ENCODE measurements at regions of chr13 and their contacts with region 1.

Region 1: DNA sequence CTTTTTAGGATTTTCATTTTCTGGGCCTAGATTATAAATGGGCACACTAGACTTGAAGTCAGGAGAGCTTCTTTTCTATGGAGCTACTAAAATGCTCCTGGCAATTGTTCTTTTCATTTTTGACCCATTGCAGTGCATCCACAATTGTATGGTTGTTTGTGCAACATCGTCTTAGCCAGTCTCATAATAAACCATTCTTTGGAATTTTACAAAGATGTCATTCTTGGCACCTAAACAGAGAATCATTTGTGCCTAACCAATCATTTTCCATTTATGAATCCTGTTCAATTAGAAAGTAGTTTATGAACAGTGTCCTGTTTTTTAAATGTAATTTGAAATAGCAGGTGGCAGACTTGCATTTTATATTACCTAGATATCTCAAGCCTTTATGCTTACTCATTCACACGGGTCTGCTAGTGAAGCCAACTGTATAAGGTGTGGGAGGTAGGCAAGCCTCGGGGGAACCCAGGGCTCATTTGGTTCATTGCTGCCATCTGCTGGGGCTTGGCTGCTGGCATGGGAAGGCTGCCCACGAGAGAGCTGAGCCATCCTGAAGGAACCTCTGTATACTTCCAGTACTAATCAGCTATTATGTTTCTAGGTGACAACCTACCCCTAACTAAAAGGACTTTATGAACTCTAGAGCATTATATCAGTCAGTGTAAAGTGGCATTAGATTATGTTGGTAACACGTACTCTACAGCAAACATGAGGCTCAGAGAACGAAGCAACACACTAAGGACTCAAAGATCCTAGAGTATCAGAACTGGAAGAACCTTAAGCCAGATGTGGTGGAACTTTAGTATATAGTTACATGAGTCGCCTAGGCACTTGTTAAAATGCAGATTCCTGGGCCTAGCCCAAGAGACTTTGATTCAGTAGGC is 60.0 kb downstream of the TPT1 start:
- DNase-seq: peak; percentile 67 to 79
- ATAC-seq: peak; percentile 99 to 100
- H3K4me3 ChIP-seq: no peak overlapping the region
- H3K27ac ChIP-seq: no peak overlapping the region
- H3K4me1 ChIP-seq: peaks cover 6% of the 10 kb centered on the region; the same call in 2 of the 3 replicates
- CTCF ChIP-seq: peak; percentile 79
- EP300 ChIP-seq: no peak
- POLR2A ChIP-seq: no peak
- RAD21 ChIP-seq: peak; percentile 91 to 92

Region 2: DNA sequence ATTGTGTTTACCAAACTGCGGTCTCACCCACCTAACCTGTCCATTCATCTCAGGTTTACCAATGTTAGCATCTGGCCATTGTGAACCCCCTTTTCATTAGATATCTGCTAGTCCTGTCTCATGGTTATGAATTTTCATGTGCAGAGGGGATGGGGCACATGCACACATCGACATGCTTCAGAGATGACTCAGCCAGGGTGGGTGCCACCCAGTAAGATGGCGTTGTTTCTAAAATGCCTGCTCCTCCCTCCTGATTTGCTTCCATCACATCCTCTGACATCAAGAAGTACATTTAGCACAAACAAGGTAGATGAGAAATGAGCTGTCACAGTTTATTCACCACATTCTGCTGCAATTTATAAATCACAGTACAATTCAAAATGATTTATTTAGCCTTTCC is 240.4 kb before region 1 on chr13:
- CTCF ChIA-PET with region 1: interaction called, 98 read pairs
- POLR2A ChIA-PET with region 1: no interaction called
- DNase-seq: no peak
- ATAC-seq: no peak
- H3K4me3 ChIP-seq: no peak overlapping the region
- H3K27ac ChIP-seq: no peak overlapping the region
- H3K4me1 ChIP-seq: no peaks in the 10 kb centered on the region
- CTCF ChIP-seq: no peak
- EP300 ChIP-seq: no peak
- POLR2A ChIP-seq: no peak
- RAD21 ChIP-seq: no peak

Region 3: DNA sequence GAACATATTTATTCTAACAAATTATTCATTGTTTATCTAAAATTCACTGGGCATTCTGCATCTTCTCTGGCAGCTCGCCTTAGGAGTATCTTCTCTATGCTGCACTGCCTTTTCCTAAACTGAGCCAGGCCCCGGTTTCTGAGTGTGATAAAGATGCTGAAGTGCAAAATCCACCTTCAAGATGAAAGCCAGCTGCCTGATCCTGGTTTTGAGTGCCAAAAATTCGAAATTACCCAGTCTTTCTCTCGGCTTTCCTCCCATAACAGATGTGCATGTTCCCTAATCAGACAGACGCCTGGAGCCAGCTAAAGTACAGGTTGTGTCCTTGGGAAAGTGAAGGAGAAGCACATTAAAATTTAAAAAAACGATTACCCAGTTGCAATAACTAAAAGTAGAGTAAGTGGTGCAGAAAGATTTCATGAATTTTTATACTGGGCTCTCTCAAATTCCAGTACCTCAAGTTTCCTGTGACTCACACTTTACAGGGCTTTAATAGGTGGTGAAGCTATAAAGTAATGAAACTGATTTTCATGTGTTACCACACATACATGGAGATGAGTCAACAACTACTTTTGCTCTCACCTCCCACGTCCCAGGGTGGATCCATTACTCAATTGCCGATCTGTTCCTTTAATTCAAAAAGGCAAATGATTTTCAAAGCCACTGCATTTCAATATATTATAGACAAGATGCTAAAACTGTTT is 225.6 kb before region 1 on chr13:
- CTCF ChIA-PET with region 1: interaction called, 98 read pairs
- POLR2A ChIA-PET with region 1: no interaction called
- DNase-seq: peak; percentile 22 to 25
- ATAC-seq: peak; percentile 73 to 81; a peak in 5 of 6 replicates
- H3K4me3 ChIP-seq: no peak overlapping the region
- H3K27ac ChIP-seq: peak overlapping the region in 1 of 2 experiments; percentile 65; a peak in 3 of 6 replicates
- H3K4me1 ChIP-seq: peaks cover 15% of the 10 kb centered on the region
- CTCF ChIP-seq: no peak
- EP300 ChIP-seq: no peak
- POLR2A ChIP-seq: no peak
- RAD21 ChIP-seq: no peak

Region 4: GRCh38 chr13:45292176-45292575 is 11.2 kb after region 1 on chr13:
- CTCF ChIA-PET with region 1: interaction called, 29 read pairs
- POLR2A ChIA-PET with region 1: no interaction called
- DNase-seq: no peak
- ATAC-seq: no peak
- H3K4me3 ChIP-seq: no peak overlapping the region
- H3K27ac ChIP-seq: no peak overlapping the region
- H3K4me1 ChIP-seq: no peaks in the 10 kb centered on the region
- CTCF ChIP-seq: no peak
- EP300 ChIP-seq: no peak
- POLR2A ChIP-seq: no peak
- RAD21 ChIP-seq: no peak

Region 5: DNA sequence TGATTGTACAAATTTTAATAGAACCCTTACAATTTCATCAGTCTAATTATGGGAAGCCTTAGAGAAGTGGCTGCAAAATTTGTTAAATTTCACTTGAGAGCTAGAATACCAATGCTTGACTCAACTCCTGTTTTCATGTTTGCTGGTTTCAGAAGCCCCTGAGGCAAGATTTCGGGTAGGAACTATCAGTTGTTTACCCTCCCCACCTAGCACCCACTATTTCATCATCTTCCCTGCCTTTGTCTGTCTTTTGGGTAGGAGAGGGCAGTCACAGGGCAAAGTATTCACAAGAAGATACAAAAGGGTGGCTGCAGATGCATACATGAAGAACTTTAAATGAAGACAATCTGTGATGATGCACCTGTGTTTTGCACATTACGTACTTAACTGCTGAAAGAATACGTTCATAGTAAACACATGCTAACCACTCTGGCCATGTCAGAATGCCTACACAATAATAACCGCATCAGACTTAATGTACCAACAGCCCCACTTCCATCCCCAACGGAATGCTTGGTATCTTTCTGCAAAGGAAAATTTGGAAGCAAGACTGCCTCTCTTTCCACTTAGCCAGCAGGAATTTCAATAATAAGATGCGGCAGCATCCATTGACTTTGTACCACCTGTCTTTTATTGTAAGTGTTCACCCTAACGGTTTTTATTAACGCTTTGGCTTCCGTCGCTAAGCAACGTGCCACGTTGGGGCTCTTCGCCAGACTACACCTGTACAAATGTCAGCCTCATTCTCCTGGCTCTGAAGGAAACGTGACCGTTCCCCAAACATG is 29.5 kb after region 1 on chr13:
- CTCF ChIA-PET with region 1: interaction called, 11 read pairs
- POLR2A ChIA-PET with region 1: no interaction called
- DNase-seq: no peak
- ATAC-seq: peak; percentile 37 to 39; a peak in 5 of 6 replicates
- H3K4me3 ChIP-seq: peak overlapping the region; percentile 32
- H3K27ac ChIP-seq: no peak overlapping the region
- H3K4me1 ChIP-seq: peaks cover 3% of the 10 kb centered on the region; the same call in 1 of the 3 replicates
- CTCF ChIP-seq: no peak
- EP300 ChIP-seq: no peak
- POLR2A ChIP-seq: no peak
- RAD21 ChIP-seq: no peak

Region 6: DNA sequence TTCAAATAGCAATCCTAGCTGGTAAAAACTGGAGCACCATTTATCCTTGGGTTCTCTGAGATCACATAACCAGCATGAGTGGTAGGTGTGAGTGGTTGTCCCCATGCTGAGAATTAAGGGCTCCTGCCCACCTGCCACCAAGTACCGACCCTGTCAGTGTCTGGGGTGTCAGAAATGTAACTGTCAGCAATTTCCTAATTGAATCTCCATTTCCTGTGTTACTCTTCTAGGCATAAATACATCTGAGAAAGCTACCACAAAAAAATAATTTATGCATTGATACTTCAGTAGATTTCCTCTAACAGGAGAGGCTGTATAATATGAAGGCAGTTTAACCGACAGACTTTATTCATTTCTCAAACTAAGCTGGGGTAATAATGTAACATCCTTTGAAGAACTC is 798.8 kb after region 1 on chr13:
- CTCF ChIA-PET with region 1: no interaction called
- POLR2A ChIA-PET with region 1: no interaction called
- DNase-seq: no peak
- ATAC-seq: no peak
- H3K4me3 ChIP-seq: no peak overlapping the region
- H3K27ac ChIP-seq: no peak overlapping the region
- H3K4me1 ChIP-seq: no peaks in the 10 kb centered on the region
- CTCF ChIP-seq: no peak
- EP300 ChIP-seq: no peak
- POLR2A ChIP-seq: no peak
- RAD21 ChIP-seq: no peak

Measured in A549 (cell line).